CD8-positive, alpha-beta T cell (primary cell): ENCODE measurements at regions of chr17 and their contacts with region 1.

Region 1: DNA sequence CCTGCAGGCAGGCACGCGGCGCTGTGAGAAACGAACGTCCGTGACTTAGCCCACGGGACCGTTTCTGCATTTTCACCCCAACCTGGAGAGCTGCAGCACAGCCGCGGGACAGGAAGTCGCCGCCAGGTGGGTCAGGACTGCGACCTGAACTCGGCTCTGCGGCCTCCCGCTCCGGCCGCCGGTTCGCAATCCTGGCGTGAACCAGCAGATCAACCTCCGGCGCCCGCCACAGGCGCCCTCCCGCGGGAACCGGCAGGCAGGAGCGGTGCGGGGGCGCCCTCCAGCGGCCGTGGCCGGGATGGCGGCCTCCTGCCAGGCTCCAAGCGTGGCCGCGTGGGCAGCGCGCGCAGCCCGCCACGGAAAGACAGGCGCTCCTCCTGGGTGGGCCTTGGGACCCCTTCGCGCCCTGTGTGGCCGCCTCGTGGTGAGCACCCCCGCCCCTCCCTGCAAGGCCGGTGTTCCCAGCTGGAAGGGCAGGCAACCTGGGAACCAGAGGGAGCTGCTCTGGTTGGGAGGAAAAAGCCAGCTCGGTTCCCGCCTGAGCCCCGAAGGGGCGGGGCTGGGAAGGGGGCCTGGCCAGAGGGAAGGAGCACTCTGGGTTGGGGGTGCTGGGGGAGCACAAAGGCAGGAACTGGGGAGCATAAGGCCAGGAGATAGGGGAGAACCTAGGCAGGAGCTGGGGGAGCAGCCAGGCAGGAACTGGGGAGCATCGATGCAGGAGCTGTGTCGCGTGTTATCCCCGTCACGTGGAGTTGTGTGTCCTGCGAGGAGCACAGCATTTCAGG is 28.2 kb downstream of the ACTG1 start:
- DNase-seq: peak; percentile 77 to 95 (median 85)
- ATAC-seq: peak; percentile 75
- H3K4me3 ChIP-seq: peak overlapping the region; percentile 26 to 49
- H3K4me3 Mint-ChIP-seq: peak overlapping the region; percentile 22
- H3K27ac ChIP-seq: no peak overlapping the region
- H3K27ac Mint-ChIP-seq: no peak overlapping the region
- H3K4me1 ChIP-seq: peaks cover 36% of the 10 kb centered on the region
- H3K4me1 Mint-ChIP-seq: peaks cover 16% of the 10 kb centered on the region
- H3K27me3 ChIP-seq: peaks cover 11 to 15% of the 10 kb centered on the region in 2 experiments
- H3K27me3 Mint-ChIP-seq: peaks cover 24% of the 10 kb centered on the region
- CTCF ChIP-seq: peak; percentile 97

Region 2: DNA sequence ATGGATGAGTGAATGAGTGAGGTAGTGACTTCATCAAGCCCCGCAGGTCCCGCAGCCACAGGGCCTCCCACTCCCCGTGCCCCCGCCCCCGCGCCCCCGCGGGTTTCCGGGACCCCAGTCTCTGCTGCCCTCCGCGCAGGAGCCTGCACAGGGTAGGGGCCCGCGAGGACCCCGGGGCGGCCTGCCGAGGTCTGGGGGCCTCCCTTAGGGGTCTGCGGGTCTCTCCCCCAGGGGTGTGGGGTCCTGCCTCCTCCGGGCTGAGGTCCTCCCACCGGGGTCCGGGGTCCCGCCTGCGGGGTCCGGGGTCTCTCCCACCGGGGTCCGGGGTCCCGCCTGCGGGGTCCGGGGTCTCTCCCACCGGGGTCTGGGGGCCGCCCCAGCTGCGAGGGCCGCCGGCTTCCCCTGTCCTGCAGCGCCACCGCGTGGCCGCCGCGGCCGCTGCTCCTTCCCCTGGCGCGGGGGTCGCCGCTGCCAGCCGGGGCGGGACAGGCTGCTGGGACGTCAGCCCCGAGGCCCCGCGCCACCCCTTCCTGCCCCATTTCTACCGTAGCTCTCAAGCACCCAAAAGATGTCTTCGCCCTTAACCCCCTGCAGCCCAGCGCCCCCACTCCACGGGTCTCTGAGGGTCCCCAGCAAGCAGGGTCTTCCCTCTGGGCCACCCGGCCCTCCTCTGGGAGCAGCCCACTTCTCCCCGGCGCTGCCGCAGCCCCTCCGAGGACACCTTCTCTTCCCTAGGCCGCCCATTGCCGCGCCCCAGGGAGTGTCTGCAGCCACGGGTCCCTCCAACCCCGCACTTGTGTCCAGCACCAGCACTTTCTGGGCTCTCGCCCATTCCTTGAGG is 503.1 kb before region 1 on chr17:
- CTCF ChIA-PET with region 1: no interaction called
- POLR2A ChIA-PET with region 1: no interaction called
- intact Hi-C with region 1: loop called in 1 of 2 experiments (anchors 10 kb)
- DNase-seq: peak in 6 of 9 experiments; percentile 25 to 66 (median 56)
- ATAC-seq: peak; percentile 74
- H3K4me3 ChIP-seq: no peak overlapping the region
- H3K4me3 Mint-ChIP-seq: no peak overlapping the region
- H3K27ac ChIP-seq: no peak overlapping the region
- H3K27ac Mint-ChIP-seq: no peak overlapping the region
- H3K4me1 ChIP-seq: peaks cover 6% of the 10 kb centered on the region
- H3K4me1 Mint-ChIP-seq: peaks cover 7% of the 10 kb centered on the region
- H3K27me3 ChIP-seq: peaks cover 2 to 5% of the 10 kb centered on the region in 2 experiments
- H3K27me3 Mint-ChIP-seq: peaks cover 23% of the 10 kb centered on the region
- CTCF ChIP-seq: peak; percentile 88

Region 3: GRCh38 chr17:81142301-81143199 is 341.8 kb before region 1 on chr17:
- CTCF ChIA-PET with region 1: interaction called, 11 read pairs
- POLR2A ChIA-PET with region 1: no interaction called
- intact Hi-C with region 1: no loop called
- DNase-seq: peak; percentile 44 to 73 (median 57)
- ATAC-seq: peak; percentile 72
- H3K4me3 ChIP-seq: no peak overlapping the region
- H3K4me3 Mint-ChIP-seq: no peak overlapping the region
- H3K27ac ChIP-seq: no peak overlapping the region
- H3K27ac Mint-ChIP-seq: no peak overlapping the region
- H3K4me1 ChIP-seq: no peaks in the 10 kb centered on the region
- H3K4me1 Mint-ChIP-seq: no peaks in the 10 kb centered on the region
- H3K27me3 ChIP-seq: peaks cover 0 to 4% of the 10 kb centered on the region in 2 experiments
- H3K27me3 Mint-ChIP-seq: peaks cover 4% of the 10 kb centered on the region
- CTCF ChIP-seq: peak; percentile 47

Region 4: GRCh38 chr17:81238817-81239600 is 245.4 kb before region 1 on chr17 and contains the starts of genes NDUFAF8 and TEPSIN:
- CTCF ChIA-PET with region 1: interaction called, 3 read pairs
- POLR2A ChIA-PET with region 1: interaction called, 4 read pairs
- intact Hi-C with region 1: loop called in 1 of 2 experiments (anchors 5 kb)
- DNase-seq: peak; percentile 91 to 99 (median 95)
- ATAC-seq: peak; percentile 94
- H3K4me3 ChIP-seq: peak within 1 kb of the TSS; percentile 80 to 84
- H3K4me3 Mint-ChIP-seq: peak within 1 kb of the TSS; percentile 92
- H3K27ac ChIP-seq: peak within 1 kb of the TSS; percentile 51 to 68
- H3K27ac Mint-ChIP-seq: peak within 1 kb of the TSS; percentile 87
- H3K4me1 ChIP-seq: peaks cover 39% of the 10 kb centered on the region
- H3K4me1 Mint-ChIP-seq: peaks cover 43% of the 10 kb centered on the region
- H3K27me3 ChIP-seq: no peaks in the 10 kb centered on the region
- H3K27me3 Mint-ChIP-seq: no peaks in the 10 kb centered on the region
- CTCF ChIP-seq: no peak
- total RNA-seq, gene NDUFAF8: 40.6 to 50.9 TPM
- total RNA-seq, gene TEPSIN: 81.4 to 88.8 TPM

Region 5: GRCh38 chr17:81294856-81295680 is 189.3 kb before region 1 on chr17 and contains the start of gene SLC38A10:
- CTCF ChIA-PET with region 1: interaction called, 26 read pairs
- POLR2A ChIA-PET with region 1: interaction called, 4 read pairs
- intact Hi-C with region 1: loop called (anchors 1 kb)
- DNase-seq: peak; percentile 78 to 94 (median 91)
- ATAC-seq: peak; percentile 83
- H3K4me3 ChIP-seq: peak within 1 kb of the TSS; percentile 77 to 98
- H3K4me3 Mint-ChIP-seq: peak within 1 kb of the TSS; percentile 94
- H3K27ac ChIP-seq: peak within 1 kb of the TSS; percentile 85 to 90
- H3K27ac Mint-ChIP-seq: peak within 1 kb of the TSS; percentile 96
- H3K4me1 ChIP-seq: peaks cover 24% of the 10 kb centered on the region
- H3K4me1 Mint-ChIP-seq: peaks cover 42% of the 10 kb centered on the region
- H3K27me3 ChIP-seq: no peaks in the 10 kb centered on the region
- H3K27me3 Mint-ChIP-seq: no peaks in the 10 kb centered on the region
- CTCF ChIP-seq: no peak
- total RNA-seq, gene SLC38A10: 16.1 to 17.4 TPM

Region 6: DNA sequence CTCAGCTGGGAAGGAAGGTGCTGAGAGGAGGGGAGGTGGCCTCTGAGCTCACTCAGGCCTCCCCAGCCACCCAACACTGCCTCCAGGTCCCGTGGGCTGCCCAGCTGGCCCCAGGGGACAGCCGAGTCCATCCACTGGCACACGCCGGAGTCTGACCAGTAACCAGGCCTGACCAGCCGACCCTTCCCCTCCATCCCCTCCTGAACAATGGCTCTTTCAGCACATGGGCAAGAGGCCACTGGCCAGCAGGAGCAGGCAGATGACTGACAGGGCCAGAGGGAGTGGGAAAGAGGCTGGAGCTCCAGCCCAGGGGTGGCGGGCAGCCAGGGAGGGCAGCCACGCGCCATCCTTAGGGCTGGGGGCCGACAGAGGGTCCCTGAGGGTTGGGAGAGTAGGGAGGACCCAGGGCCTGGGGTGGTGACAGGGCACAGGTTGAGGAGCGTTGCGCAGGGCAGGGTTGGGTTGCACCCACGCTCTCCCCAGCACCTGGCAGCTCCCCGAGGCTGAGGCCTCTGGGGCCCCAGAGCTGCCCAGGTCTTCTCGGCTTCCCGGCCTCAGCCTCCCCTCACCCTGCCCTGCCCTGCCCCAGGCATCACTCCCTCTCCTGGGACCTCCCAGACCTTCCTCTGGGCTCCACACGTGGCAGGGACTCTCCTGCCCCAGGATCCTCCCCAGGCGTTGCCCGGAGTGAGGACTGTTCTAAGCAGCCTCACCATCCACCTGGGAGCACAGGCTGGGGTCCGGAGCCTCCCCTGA is 169.1 kb before region 1 on chr17:
- CTCF ChIA-PET with region 1: no interaction called
- POLR2A ChIA-PET with region 1: no interaction called
- intact Hi-C with region 1: no loop called
- DNase-seq: no peak
- ATAC-seq: no peak
- H3K4me3 ChIP-seq: no peak overlapping the region
- H3K4me3 Mint-ChIP-seq: no peak overlapping the region
- H3K27ac ChIP-seq: no peak overlapping the region
- H3K27ac Mint-ChIP-seq: no peak overlapping the region
- H3K4me1 ChIP-seq: no peaks in the 10 kb centered on the region
- H3K4me1 Mint-ChIP-seq: no peaks in the 10 kb centered on the region
- H3K27me3 ChIP-seq: peaks cover 0 to under 1% of the 10 kb centered on the region in 2 experiments
- H3K27me3 Mint-ChIP-seq: peaks cover 12% of the 10 kb centered on the region
- CTCF ChIP-seq: no peak

Region 7: GRCh38 chr17:81394921-81395599 is 89.3 kb before region 1 on chr17 and contains the start of gene BAHCC1:
- CTCF ChIA-PET with region 1: interaction called, 5 read pairs
- POLR2A ChIA-PET with region 1: no interaction called
- intact Hi-C with region 1: loop called in 1 of 2 experiments (anchors 5 kb)
- DNase-seq: peak; percentile 45 to 87 (median 77)
- ATAC-seq: peak; percentile 65
- H3K4me3 ChIP-seq: no peak within 1 kb of the TSS
- H3K4me3 Mint-ChIP-seq: peak within 1 kb of the TSS; percentile 43
- H3K27ac ChIP-seq: no peak within 1 kb of the TSS
- H3K27ac Mint-ChIP-seq: no peak within 1 kb of the TSS
- H3K4me1 ChIP-seq: peaks cover 56% of the 10 kb centered on the region
- H3K4me1 Mint-ChIP-seq: peaks cover 29% of the 10 kb centered on the region
- H3K27me3 ChIP-seq: peaks cover 69 to 70% of the 10 kb centered on the region in 2 experiments
- H3K27me3 Mint-ChIP-seq: peaks cover 47% of the 10 kb centered on the region
- CTCF ChIP-seq: no peak
- total RNA-seq, gene BAHCC1: 0.08 to 0.24 TPM

Region 8: DNA sequence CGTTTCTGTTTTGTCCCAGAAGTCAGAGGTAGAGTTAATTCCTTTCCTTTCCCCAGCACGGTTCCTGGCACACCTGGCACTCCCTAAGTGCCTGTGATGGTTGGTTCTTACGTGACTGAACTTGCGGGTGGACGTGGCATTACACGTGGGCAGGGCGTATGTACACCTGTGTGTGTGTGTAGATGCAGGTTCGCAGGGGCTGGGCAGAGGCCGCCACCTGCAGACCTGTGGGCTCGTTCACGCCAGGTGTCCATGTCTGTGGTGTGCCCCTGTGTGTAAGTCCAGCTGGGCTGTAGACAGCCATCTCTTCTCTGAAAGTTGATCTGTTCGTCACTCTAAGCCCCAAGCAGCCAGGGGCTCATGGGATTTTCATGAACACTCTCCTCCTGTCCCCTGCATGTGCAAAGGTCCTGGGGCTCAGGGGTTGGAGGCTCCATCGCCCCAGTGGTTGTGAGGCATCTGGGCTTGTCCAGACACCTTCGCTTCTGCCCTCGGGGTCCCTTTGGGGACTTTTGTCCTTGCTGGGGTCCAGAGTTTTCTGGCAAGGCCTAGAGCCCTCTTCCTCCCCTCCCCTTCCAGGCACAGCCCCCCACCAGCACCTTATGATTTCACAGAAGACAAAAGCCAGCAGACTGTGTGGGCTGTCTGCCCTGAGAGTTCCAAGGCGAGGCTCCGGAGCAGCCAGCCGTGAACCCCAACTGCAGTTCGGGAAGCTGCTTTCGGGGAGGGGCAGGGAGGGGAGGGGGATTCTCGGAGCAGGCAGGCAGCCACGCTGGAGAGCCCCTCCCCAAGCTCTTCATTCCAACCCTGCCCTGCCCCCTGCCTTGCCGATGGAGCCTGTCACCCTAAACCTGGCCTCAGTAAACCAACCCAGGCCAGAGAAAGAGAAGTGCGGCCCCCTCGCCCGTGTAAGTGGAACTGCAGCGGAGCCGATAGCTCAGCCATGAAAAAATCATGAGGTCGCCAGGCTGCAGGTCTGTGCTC is 38.4 kb after region 1 on chr17:
- CTCF ChIA-PET with region 1: no interaction called
- POLR2A ChIA-PET with region 1: no interaction called
- intact Hi-C with region 1: no loop called
- DNase-seq: no peak
- ATAC-seq: no peak
- H3K4me3 ChIP-seq: no peak overlapping the region
- H3K4me3 Mint-ChIP-seq: no peak overlapping the region
- H3K27ac ChIP-seq: no peak overlapping the region
- H3K27ac Mint-ChIP-seq: no peak overlapping the region
- H3K4me1 ChIP-seq: peaks cover 17% of the 10 kb centered on the region
- H3K4me1 Mint-ChIP-seq: peaks cover 12% of the 10 kb centered on the region
- H3K27me3 ChIP-seq: peaks cover 0 to 13% of the 10 kb centered on the region in 2 experiments
- H3K27me3 Mint-ChIP-seq: peaks cover 7% of the 10 kb centered on the region
- CTCF ChIP-seq: no peak

Region 9: DNA sequence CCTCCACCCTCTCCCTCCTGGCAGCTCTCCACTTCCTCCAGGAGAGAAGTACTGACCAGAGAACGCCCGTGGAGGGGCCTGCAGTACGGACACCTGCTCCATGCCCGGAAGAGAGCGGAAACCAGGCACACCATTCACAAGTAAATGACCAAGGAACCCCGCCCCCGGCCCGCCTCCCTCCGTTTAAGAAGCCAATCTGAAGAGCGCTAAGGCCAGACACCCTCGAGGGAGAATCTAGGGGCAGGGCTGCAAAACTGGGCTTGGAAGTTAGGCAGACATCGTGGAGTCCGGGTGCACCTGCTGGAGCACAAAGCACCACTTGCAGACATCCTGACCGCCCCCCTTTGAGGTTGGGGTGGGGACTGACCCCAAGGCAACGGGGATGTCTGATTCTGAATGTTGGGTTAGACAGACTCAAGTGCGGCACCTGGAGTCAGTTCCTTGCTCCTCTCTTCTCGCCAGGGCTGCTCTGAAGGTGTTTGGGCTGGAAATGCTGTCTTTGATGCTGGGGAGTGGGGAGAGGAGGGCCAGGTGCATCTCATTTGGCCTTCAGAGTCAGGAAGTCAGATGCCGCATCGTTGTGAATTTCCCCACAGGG is 68.7 kb after region 1 on chr17:
- CTCF ChIA-PET with region 1: interaction called, 4 read pairs
- POLR2A ChIA-PET with region 1: interaction called, 3 read pairs
- intact Hi-C with region 1: loop called (anchors 1 kb)
- DNase-seq: peak; percentile 55 to 91 (median 79)
- ATAC-seq: peak; percentile 71
- H3K4me3 ChIP-seq: peak overlapping the region; percentile 92 to 96
- H3K4me3 Mint-ChIP-seq: peak overlapping the region; percentile 86
- H3K27ac ChIP-seq: peak overlapping the region; percentile 82 to 84
- H3K27ac Mint-ChIP-seq: peak overlapping the region; percentile 87
- H3K4me1 ChIP-seq: peaks cover 21% of the 10 kb centered on the region
- H3K4me1 Mint-ChIP-seq: peaks cover 31% of the 10 kb centered on the region
- H3K27me3 ChIP-seq: no peaks in the 10 kb centered on the region
- H3K27me3 Mint-ChIP-seq: no peaks in the 10 kb centered on the region
- CTCF ChIP-seq: no peak

Region 10: GRCh38 chr17:81741594-81742452 is 257.4 kb after region 1 on chr17:
- CTCF ChIA-PET with region 1: no interaction called
- POLR2A ChIA-PET with region 1: no interaction called
- intact Hi-C with region 1: no loop called
- DNase-seq: peak in 1 of 9 experiments; percentile 10
- ATAC-seq: no peak
- H3K4me3 ChIP-seq: no peak overlapping the region
- H3K4me3 Mint-ChIP-seq: no peak overlapping the region
- H3K27ac ChIP-seq: no peak overlapping the region
- H3K27ac Mint-ChIP-seq: no peak overlapping the region
- H3K4me1 ChIP-seq: no peaks in the 10 kb centered on the region
- H3K4me1 Mint-ChIP-seq: peaks cover 2% of the 10 kb centered on the region
- H3K27me3 ChIP-seq: peaks cover 0 to 9% of the 10 kb centered on the region in 2 experiments
- H3K27me3 Mint-ChIP-seq: peaks cover 6% of the 10 kb centered on the region
- CTCF ChIP-seq: no peak